ENCODE measurements at regions of chr1 and their contacts with region 1.

Region 1: GRCh38 chr1:156226116-156226538 is 13.3 kb downstream of the PMF1 start:
- DNase-seq: no peak
- H3K4me3 ChIP-seq: no peak overlapping the region
- H3K27ac ChIP-seq: no peak overlapping the region
- H3K4me1 ChIP-seq: peaks cover 6% of the 10 kb centered on the region
- H3K27me3 ChIP-seq: no peaks in the 10 kb centered on the region

Region 2: DNA sequence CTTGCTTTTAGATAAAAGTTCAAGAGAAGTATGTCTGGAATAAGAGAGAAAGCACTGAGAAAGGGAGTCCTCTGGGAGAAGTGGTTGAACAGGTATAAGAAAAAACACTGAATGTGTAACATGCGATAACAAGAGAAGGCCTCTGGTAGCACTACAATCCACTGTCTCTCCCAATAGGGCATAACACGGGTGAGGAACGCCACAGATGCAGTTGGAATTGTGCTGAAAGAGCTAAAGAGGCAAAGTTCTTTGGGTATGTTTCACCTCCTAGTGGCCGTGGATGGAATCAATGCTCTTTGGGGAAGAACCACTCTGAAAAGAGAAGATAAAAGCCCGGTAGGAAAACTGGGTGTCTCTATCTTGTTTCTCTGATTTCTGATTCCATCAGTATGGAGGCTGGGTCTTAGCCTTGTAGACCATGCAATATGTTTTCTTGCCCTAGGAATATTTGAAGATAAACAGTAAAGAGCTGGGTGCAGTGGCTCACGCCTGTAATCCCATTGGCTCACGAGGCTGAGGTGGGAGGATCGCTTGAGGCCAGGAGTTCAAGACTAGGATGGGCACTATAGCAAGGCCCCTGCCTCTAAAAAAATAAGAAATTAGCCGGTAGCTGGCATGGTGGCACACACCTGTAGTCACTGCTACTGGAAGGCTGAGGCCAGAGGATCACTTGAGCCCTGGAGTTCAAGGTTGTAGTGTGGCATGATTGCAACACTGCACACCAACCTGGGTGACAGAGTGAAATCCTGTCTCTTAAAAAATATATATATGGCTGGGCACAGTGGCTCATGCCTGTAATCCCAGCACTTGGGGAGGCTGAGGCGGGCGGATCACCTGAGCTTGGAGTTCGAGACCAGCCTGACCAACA is 496.9 kb before region 1 on chr1:
- in situ Hi-C with region 1: no loop called
- DNase-seq: peak; percentile 75
- H3K4me3 ChIP-seq: no peak overlapping the region
- H3K27ac ChIP-seq: peak overlapping the region; percentile 35; the same call in 1 of the 2 replicates
- H3K4me1 ChIP-seq: no peaks in the 10 kb centered on the region
- H3K27me3 ChIP-seq: no peaks in the 10 kb centered on the region

Region 3: GRCh38 chr1:156033011-156033410 is 193.1 kb before region 1 on chr1:
- in situ Hi-C with region 1: no loop called
- DNase-seq: peak; percentile 63
- H3K4me3 ChIP-seq: no peak overlapping the region
- H3K27ac ChIP-seq: no peak overlapping the region
- H3K4me1 ChIP-seq: 0 out of 2 replicates have a peak, but pooled peaks cover 6% of the 10 kb centered on the region
- H3K27me3 ChIP-seq: no peaks in the 10 kb centered on the region

Region 4: GRCh38 chr1:156096640-156097391 is 129.3 kb before region 1 on chr1:
- in situ Hi-C with region 1: loop called (anchors 10 kb)
- DNase-seq: peak; percentile 94
- H3K4me3 ChIP-seq: no peak overlapping the region
- H3K27ac ChIP-seq: peak overlapping the region; percentile 82
- H3K4me1 ChIP-seq: peaks cover 15% of the 10 kb centered on the region
- H3K27me3 ChIP-seq: no peaks in the 10 kb centered on the region

Region 5: GRCh38 chr1:156146020-156146768 is 79.9 kb before region 1 on chr1:
- in situ Hi-C with region 1: loop called (anchors 10 kb)
- DNase-seq: peak; percentile 96
- H3K4me3 ChIP-seq: no peak overlapping the region
- H3K27ac ChIP-seq: peak overlapping the region; percentile 63
- H3K4me1 ChIP-seq: peaks cover 26% of the 10 kb centered on the region
- H3K27me3 ChIP-seq: no peaks in the 10 kb centered on the region